Calu3 (cell line): ENCODE measurements at regions of chr1 and their contacts with region 1.

Region 1: DNA sequence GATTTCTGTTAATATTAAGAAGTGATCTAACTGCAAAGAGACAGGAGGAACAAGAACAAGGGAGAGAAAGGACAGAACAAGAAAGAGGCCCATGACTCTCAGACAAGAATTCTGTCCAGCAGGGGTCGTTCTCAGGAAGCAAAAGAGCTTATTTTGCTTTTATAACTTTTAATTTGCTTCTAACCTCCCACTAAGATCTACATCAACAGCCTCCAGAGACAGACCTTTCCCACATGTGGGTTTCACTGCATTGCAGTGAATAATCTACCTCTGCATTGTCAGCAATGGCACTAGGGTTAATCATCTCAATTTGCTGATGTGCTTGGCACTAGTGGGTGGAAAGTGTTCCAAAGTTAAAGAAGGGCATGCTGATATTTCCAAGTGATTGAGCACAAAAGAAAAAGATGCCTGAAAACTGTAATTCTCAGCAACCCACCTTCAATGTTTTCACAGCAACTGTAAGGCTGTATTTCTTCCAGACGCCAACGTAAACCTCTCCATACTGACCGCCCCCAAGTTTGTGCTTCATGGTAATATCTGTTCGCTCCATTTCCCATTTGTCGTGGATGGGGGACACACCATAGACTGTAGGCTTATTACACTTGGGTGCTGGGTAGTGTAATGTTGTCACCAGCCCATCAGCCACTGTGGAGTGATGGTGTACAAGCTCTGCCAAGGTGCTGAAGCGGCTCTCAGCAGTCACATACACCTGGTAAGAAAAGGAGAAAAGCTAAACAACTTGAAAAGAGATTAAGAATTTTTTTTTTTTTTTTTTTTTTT is 39.5 kb downstream of the TOR3A start:
- DNase-seq: peak; percentile 64
- H3K4me3 Mint-ChIP-seq: no peak overlapping the region
- H3K27ac Mint-ChIP-seq: no peak overlapping the region
- H3K4me1 Mint-ChIP-seq: peaks cover 29% of the 10 kb centered on the region
- H3K27me3 Mint-ChIP-seq: no peaks in the 10 kb centered on the region
- CTCF ChIP-seq: peak; percentile 78

Region 2: DNA sequence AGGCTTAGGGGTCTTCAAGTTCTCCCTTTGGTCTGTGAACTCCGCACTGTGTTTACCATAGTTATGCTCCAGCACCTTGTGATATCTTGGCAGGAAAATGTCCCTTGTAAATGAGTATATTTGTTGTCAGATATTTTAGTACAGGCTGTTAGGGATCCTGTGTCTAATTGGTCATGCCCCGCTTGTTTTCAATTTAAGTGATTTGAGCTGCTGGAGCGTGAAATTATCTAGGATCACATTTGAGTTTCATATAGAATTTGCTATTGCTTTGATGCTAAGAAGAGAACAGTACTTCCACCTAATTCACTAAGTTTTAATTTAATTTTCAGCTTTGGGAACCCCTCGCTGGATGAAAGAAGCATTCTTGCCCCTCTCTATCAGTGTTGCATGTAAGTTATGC is 54.9 kb before region 1 on chr1:
- CTCF ChIA-PET with region 1: no interaction called
- intact Hi-C with region 1: no loop called
- DNase-seq: no peak
- H3K4me3 Mint-ChIP-seq: no peak overlapping the region
- H3K27ac Mint-ChIP-seq: no peak overlapping the region
- H3K4me1 Mint-ChIP-seq: no peaks in the 10 kb centered on the region
- H3K27me3 Mint-ChIP-seq: no peaks in the 10 kb centered on the region
- CTCF ChIP-seq: no peak

Region 3: GRCh38 chr1:179194068-179194537 is 72.8 kb after region 1 on chr1:
- CTCF ChIA-PET with region 1: interaction called, 15 read pairs
- intact Hi-C with region 1: loop called (anchors 1 kb)
- DNase-seq: no peak
- H3K4me3 Mint-ChIP-seq: no peak overlapping the region
- H3K27ac Mint-ChIP-seq: peak overlapping the region; percentile 62
- H3K4me1 Mint-ChIP-seq: peaks cover 23% of the 10 kb centered on the region
- H3K27me3 Mint-ChIP-seq: no peaks in the 10 kb centered on the region
- CTCF ChIP-seq: no peak

Region 4: DNA sequence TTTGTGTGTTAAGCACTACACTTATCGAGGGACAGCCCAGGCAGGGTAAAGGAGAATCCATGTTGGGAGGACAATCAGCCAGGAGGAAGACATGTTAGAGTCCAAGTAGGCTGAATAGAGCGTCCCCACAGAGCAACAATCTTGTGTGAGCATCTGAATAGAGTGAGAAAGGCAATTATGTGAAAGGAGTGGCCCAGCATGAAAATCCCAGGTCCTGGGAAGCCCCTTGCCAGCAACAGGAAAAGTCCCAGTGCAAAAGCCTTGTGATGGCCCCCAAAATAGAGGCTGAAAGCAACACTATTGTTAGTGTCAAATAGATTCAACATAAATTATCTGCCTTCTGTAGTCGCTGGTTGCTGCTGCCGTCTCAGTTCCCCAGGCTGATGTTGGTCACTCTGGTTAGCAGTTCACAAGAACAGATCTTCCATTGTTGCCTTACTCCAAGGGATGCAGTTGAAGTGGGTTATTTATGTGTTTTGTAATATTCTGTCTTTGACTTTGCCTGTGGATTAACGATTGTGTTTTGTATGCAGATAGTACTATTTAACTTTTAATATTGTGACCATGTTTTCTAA is 120.3 kb after region 1 on chr1:
- CTCF ChIA-PET with region 1: interaction called, 12 read pairs
- intact Hi-C with region 1: no loop called
- DNase-seq: no peak
- H3K4me3 Mint-ChIP-seq: no peak overlapping the region
- H3K27ac Mint-ChIP-seq: no peak overlapping the region
- H3K4me1 Mint-ChIP-seq: peaks cover 7% of the 10 kb centered on the region
- H3K27me3 Mint-ChIP-seq: no peaks in the 10 kb centered on the region
- CTCF ChIP-seq: no peak

Region 5: DNA sequence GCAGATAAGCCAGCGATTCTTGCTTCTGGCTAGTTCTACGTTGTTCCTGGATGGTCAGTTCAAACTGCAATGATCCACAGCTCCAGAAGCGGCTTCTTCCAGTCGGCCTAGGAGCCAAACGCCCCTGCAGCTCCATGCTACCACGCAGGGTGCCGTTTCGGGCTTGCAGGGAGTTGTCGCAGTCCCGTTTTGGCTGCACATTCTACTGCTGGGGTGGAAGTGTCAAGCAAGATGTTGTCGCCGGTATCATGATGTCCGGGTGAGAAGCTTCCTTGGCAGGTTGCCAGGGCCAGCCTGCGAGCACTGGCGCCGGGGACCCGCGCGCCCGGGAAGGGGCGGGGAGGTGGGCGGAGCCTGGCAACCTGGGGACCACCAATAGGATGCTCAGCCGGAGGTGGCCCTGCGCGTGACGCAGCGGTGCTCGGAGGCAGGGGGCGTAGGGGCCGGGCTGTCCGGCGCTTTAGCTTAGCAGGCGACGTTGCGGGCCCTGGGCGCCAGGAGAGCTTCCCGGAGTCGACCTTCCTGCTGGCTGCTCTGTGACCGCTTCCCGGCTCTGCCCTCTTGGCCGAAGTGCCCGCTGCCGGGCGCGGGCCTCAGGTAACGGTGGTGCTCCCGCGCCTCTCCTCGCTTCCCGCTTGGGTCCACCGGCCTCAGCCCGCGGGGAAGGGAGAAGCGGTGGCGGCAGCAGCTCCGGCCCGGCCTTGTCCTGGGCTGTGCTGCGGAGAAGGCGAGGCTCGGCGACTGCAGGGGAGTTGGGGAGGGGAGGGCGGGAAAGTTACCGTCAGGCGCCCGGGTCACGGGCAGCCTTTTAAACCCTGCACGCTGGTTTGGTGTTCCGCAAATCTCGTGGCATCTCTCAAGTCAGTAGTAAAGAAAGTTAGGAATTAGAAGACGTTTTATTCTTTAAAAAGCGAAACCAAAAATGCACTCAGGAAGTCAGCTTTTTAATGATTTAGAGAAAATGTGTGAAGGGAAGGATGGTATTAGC is 172.3 kb after region 1 on chr1 and contains the start of gene SOAT1:
- CTCF ChIA-PET with region 1: interaction called, 10 read pairs
- intact Hi-C with region 1: loop called (anchors 1 kb)
- DNase-seq: peak; percentile 98
- H3K4me3 Mint-ChIP-seq: peak within 1 kb of the TSS; percentile 99
- H3K27ac Mint-ChIP-seq: peak within 1 kb of the TSS; percentile 93
- H3K4me1 Mint-ChIP-seq: peaks cover 46% of the 10 kb centered on the region
- H3K27me3 Mint-ChIP-seq: no peaks in the 10 kb centered on the region
- CTCF ChIP-seq: peak; percentile 35
- total RNA-seq, gene SOAT1: 134 and 190 TPM in 2 replicates